Left cardiac atrium (tissue), 4 donors: ENCODE measurements at regions of chr13 and their contacts with region 1.

Region 1: GRCh38 chr13:75864718-75865117 is 228.6 kb downstream of the LMO7 start:
- DNase-seq: no peak
- ATAC-seq: no peak

Region 2: GRCh38 chr13:76667551-76667950 is 802.8 kb after region 1 on chr13:
- intact Hi-C with region 1: loop called in 1 of 2 experiments (anchors 10 kb)
- DNase-seq: no peak
- ATAC-seq: peak; percentile 56 to 78